Lower leg skin (tissue), 4 donors: ENCODE measurements at regions of chr1 and their contacts with region 1.

Region 1: GRCh38 chr1:154878371-154879022 is 8.4 kb upstream of the KCNN3 start:
- DNase-seq: peak; percentile 71 to 95
- H3K4me3 ChIP-seq: no peak overlapping the region
- CTCF ChIP-seq: peak in 1 of 3 donors; percentile 32
- POLR2A ChIP-seq: no peak

Region 2: DNA sequence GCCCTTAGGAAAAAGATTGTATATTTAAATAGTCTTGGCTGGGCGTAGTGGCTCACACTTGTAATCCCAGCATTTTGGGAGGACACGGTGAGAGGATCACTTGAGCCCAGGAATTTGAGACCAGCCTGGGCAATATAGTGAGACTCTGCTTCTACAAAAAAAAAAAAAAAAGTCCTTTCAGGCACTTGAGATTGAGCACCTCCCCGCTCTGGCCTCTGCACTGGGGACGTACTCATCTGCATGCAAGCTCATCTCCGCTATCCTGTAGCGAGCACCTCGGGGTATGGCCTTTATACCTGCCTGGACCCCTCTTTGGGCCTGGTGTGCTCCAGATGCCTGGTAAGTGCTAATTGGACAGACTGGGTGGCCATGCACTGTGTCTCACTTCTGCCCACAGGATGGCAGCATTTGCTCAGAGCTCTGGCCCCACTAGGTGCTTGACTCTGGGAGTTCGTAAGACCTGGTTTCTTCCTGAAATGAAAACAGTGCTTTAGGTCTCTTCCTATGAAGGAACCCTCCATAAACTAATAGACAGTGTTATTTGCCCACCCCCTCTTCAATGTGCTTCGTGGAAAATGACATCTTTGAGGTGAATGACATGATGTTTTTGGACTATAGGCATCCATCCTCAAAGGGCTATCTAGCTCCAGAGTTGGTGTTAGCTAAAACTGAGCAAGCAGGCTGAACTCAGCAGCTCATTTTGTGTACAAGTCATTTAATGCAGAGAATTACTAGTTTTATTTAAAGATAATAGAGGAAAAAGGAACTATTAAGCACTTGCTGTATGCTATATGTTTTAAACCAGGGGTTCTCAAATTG is 208.8 kb before region 1 on chr1:
- intact Hi-C with region 1: loop called (anchors 5 kb)
- DNase-seq: peak; percentile 63 to 90
- H3K4me3 ChIP-seq: no peak overlapping the region
- CTCF ChIP-seq: peak in 1 of 3 donors; percentile 48
- POLR2A ChIP-seq: no peak